ENCODE measurements at regions of chr7 and their contacts with region 1.

Region 1: GRCh38 chr7:134690016-134690415 is 43.4 kb downstream of the BPGM start:
- DNase-seq: peak in 2 of 3 donors; percentile 28
- H3K4me3 ChIP-seq: no peak overlapping the region
- H3K27ac ChIP-seq: no peak overlapping the region
- H3K4me1 ChIP-seq: peaks cover 0 to 10% (median 4%) of the 10 kb centered on the region in 4 experiments
- H3K27me3 ChIP-seq: peaks cover 0 to 28% (median 4%) of the 10 kb centered on the region in 5 experiments

Region 2: GRCh38 chr7:134165252-134165651 is 524.8 kb before region 1 on chr7:
- CTCF ChIA-PET with region 1: no interaction called
- POLR2A ChIA-PET with region 1: no interaction called
- DNase-seq: no peak
- H3K4me3 ChIP-seq: no peak overlapping the region
- H3K27ac ChIP-seq: no peak overlapping the region
- H3K4me1 ChIP-seq: no peaks in the 10 kb centered on the region
- H3K27me3 ChIP-seq: no peaks in the 10 kb centered on the region

Region 3: DNA sequence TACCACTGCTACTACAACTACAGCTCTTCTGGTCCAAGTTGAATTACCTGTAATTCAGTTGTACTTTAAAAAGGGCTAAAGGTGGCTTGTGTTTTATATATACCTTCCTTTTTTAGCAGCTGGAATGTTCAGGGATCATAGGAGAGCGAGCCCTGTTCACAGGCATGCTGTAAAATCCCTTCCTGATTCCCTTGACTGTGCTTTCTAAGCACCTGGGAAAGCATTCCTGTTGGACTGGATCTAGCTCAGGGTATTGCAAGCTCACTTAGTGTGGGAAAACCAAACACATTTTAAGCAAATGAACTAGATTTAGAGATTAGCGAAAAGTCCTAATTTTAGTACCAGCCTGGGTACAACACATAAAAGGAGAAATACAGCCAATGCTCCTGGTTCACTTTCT is 11.9 kb before region 1 on chr7:
- CTCF ChIA-PET with region 1: interaction called, 10 read pairs
- POLR2A ChIA-PET with region 1: no interaction called
- DNase-seq: no peak
- H3K4me3 ChIP-seq: no peak overlapping the region
- H3K27ac ChIP-seq: no peak overlapping the region
- H3K4me1 ChIP-seq: no peaks in the 10 kb centered on the region
- H3K27me3 ChIP-seq: no peaks in the 10 kb centered on the region

Region 4: GRCh38 chr7:134710859-134711624 is 21.0 kb after region 1 on chr7:
- CTCF ChIA-PET with region 1: no interaction called
- POLR2A ChIA-PET with region 1: no interaction called
- DNase-seq: no peak
- H3K4me3 ChIP-seq: no peak overlapping the region
- H3K27ac ChIP-seq: no peak overlapping the region
- H3K4me1 ChIP-seq: no peaks in the 10 kb centered on the region
- H3K27me3 ChIP-seq: peaks cover 0 to 2% (median 0%) of the 10 kb centered on the region in 5 experiments

Region 5: GRCh38 chr7:134750083-134751062 is 60.4 kb after region 1 on chr7:
- CTCF ChIA-PET with region 1: no interaction called
- POLR2A ChIA-PET with region 1: no interaction called
- DNase-seq: peak; percentile 31 to 41 (median 40)
- H3K4me3 ChIP-seq: no peak overlapping the region
- H3K27ac ChIP-seq: no peak overlapping the region
- H3K4me1 ChIP-seq: no peaks in the 10 kb centered on the region
- H3K27me3 ChIP-seq: no peaks in the 10 kb centered on the region